ENCODE measurements at regions of chr16 and their contacts with region 1.

Region 1: DNA sequence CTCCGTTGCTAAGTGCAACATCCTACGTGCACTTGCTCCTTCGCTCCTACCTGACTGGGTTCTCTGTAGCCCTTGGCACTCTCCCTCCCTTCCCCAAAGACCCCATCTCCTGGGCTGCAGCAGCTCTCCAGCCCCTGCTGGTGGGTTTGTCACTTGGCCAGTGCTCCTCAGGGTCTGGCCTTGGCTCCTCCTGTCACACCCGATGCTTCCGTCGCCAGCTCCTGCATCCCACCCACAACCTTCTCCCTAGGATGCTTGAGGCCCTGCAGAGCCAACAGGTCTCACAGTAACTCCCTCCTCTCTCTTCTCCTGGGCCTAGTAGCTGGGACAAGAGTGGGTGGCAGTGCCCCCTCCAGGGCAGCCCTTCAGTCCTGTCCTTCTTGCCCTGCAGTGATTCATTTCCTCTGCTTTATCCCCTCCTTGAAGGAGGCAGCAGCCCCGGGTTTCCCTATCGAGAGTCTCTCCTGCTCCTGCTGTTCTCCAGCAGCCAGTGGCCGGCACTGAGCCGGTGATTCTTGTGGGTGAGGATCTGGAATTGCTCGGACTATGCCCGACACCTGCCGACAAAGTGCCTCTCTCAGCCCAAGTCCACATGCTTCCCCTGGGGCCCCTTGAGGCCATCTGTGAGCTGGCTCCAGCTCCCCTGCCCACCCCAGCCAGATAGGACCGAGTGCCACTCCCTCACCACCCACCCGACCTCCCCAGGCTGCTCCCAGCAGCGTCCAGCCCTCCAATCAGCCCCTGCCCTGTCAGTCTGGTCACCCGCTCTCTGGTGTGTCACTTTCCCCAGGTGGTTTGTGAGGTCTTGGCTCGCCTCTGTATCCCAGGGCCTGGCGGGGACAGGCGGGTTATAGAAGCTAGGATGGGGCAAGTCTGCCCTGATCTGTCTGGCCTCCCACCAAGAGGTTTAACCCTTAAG is 3.8 kb downstream of the LITAFD start:
- DNase-seq: peak; percentile 69
- H3K4me3 ChIP-seq: no peak overlapping the region
- H3K27ac ChIP-seq: no peak overlapping the region; the same call in 1 of the 2 replicates
- H3K4me1 ChIP-seq: peaks cover 33% of the 10 kb centered on the region
- H3K27me3 ChIP-seq: no peaks in the 10 kb centered on the region

Region 2: GRCh38 chr16:8567750-8568617 is 317.9 kb before region 1 on chr16:
- in situ Hi-C with region 1: no loop called
- DNase-seq: peak; percentile 96
- H3K4me3 ChIP-seq: no peak overlapping the region
- H3K27ac ChIP-seq: no peak overlapping the region
- H3K4me1 ChIP-seq: peaks cover 9% of the 10 kb centered on the region
- H3K27me3 ChIP-seq: no peaks in the 10 kb centered on the region

Region 3: GRCh38 chr16:8655184-8655717 is 230.7 kb before region 1 on chr16:
- in situ Hi-C with region 1: loop called (anchors 10 kb)
- DNase-seq: peak; percentile 48
- H3K4me3 ChIP-seq: no peak overlapping the region
- H3K27ac ChIP-seq: no peak overlapping the region
- H3K4me1 ChIP-seq: no peaks in the 10 kb centered on the region
- H3K27me3 ChIP-seq: no peaks in the 10 kb centered on the region